B cell (primary cell): ENCODE measurements at regions of chr1 and their contacts with region 1.

Region 1: GRCh38 chr1:223123011-223123610 is 19.9 kb downstream of the TLR5 start:
- DNase-seq: no peak
- ATAC-seq: no peak
- H3K4me3 ChIP-seq: peak overlapping the region in 1 of 5 experiments; percentile 18
- H3K4me3 Mint-ChIP-seq: peak overlapping the region; percentile 27
- H3K27ac ChIP-seq: no peak overlapping the region
- H3K27ac Mint-ChIP-seq: no peak overlapping the region
- H3K4me1 ChIP-seq: peaks cover 4 to 5% of the 10 kb centered on the region in 2 donors
- H3K4me1 Mint-ChIP-seq: peaks cover 6% of the 10 kb centered on the region
- H3K27me3 ChIP-seq: peaks cover 0 to 3% (median 0%) of the 10 kb centered on the region in 4 experiments
- H3K27me3 Mint-ChIP-seq: peaks cover 4% of the 10 kb centered on the region
- CTCF ChIP-seq: no peak

Region 2: DNA sequence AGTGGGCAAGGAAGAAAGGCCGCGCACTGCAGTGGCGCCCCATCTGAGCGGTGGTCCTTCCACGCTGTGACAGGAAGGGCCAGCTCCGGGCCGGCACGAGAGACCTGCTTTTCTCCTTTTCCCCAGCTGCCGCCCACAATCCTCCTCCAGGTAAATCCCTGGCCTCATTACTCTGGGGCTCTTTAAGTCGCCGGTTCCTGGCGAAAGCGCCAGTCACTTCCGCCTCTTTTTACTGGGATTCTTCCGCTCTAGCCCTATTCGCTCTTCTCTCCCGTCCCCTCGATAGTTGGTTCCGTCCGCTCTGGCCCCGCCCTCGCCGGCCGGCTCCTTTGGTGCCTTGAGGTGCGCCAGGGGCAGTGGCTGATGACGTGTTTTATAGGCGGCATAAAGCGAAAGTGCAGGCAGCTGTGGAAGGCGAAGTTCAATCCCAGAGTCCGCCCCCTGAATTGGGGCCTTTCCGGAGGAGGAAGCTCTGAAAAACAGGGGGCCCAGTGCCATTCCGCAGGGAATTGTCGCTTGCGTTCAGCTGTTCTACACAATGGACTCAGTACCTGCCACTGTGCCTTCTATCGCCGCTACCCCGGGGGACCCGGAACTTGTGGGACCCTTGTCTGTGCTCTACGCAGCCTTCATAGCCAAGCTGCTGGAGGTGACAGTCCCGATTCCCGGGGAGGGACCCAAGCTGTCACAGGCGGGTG is 479.0 kb before region 1 on chr1:
- CTCF ChIA-PET with region 1: no interaction called
- POLR2A ChIA-PET with region 1: no interaction called
- intact Hi-C with region 1: loop called (anchors 5 kb)
- DNase-seq: peak; percentile 98
- ATAC-seq: peak; percentile 96
- H3K4me3 ChIP-seq: peak overlapping the region; percentile 71 to 98 (median 95)
- H3K4me3 Mint-ChIP-seq: peak overlapping the region; percentile 86
- H3K27ac ChIP-seq: peak overlapping the region; percentile 97
- H3K27ac Mint-ChIP-seq: peak overlapping the region; percentile 91
- H3K4me1 ChIP-seq: peaks cover 13 to 15% of the 10 kb centered on the region in 2 donors
- H3K4me1 Mint-ChIP-seq: peaks cover 30% of the 10 kb centered on the region
- H3K27me3 ChIP-seq: no peaks in the 10 kb centered on the region
- H3K27me3 Mint-ChIP-seq: no peaks in the 10 kb centered on the region
- CTCF ChIP-seq: no peak

Region 3: DNA sequence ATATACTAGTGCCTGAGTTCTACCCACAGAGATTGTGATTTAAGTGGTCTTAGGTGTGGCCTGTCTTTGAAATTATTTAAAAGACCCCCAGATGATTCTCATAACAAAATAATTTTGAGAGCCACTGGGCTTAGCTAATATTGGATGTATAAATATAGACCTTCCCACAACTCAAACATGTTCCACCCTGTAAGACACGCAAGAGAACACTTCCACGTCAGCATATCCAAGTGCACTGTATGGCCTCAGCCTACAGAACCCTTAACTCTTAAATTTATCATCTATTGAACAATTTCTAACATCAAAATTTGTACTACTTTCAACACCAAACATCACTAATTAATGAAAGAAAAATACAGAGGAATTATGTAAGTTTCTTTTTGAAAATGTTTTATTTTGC is 383.6 kb before region 1 on chr1:
- CTCF ChIA-PET with region 1: interaction called, 12 read pairs
- POLR2A ChIA-PET with region 1: no interaction called
- intact Hi-C with region 1: loop called (anchors 1 kb)
- DNase-seq: no peak
- ATAC-seq: no peak
- H3K4me3 ChIP-seq: peak overlapping the region; percentile 17 to 53 (median 33)
- H3K4me3 Mint-ChIP-seq: no peak overlapping the region
- H3K27ac ChIP-seq: peak overlapping the region; percentile 50 to 77
- H3K27ac Mint-ChIP-seq: no peak overlapping the region
- H3K4me1 ChIP-seq: peaks cover 58 to 61% of the 10 kb centered on the region in 2 donors
- H3K4me1 Mint-ChIP-seq: peaks cover 44% of the 10 kb centered on the region
- H3K27me3 ChIP-seq: no peaks in the 10 kb centered on the region
- H3K27me3 Mint-ChIP-seq: no peaks in the 10 kb centered on the region
- CTCF ChIP-seq: no peak

Region 4: GRCh38 chr1:222792744-222793143 is 330.4 kb before region 1 on chr1:
- CTCF ChIA-PET with region 1: interaction called, 22 read pairs
- POLR2A ChIA-PET with region 1: no interaction called
- intact Hi-C with region 1: loop called (anchors 1 kb)
- DNase-seq: peak; percentile 54
- ATAC-seq: peak; percentile 54
- H3K4me3 ChIP-seq: no peak overlapping the region
- H3K4me3 Mint-ChIP-seq: no peak overlapping the region
- H3K27ac ChIP-seq: no peak overlapping the region
- H3K27ac Mint-ChIP-seq: peak overlapping the region; percentile 47
- H3K4me1 ChIP-seq: peaks cover 16 to 21% of the 10 kb centered on the region in 2 donors
- H3K4me1 Mint-ChIP-seq: peaks cover 40% of the 10 kb centered on the region
- H3K27me3 ChIP-seq: no peaks in the 10 kb centered on the region
- H3K27me3 Mint-ChIP-seq: no peaks in the 10 kb centered on the region
- CTCF ChIP-seq: peak; percentile 69

Region 5: GRCh38 chr1:223133824-223134435 is 10.8 kb after region 1 on chr1:
- CTCF ChIA-PET with region 1: interaction called, 95 read pairs
- POLR2A ChIA-PET with region 1: no interaction called
- intact Hi-C with region 1: no loop called
- DNase-seq: peak; percentile 83
- ATAC-seq: peak; percentile 92
- H3K4me3 ChIP-seq: peak overlapping the region; percentile 13 to 58 (median 19)
- H3K4me3 Mint-ChIP-seq: peak overlapping the region; percentile 83
- H3K27ac ChIP-seq: no peak overlapping the region
- H3K27ac Mint-ChIP-seq: no peak overlapping the region
- H3K4me1 ChIP-seq: peaks cover 16 to 19% of the 10 kb centered on the region in 2 donors
- H3K4me1 Mint-ChIP-seq: peaks cover 22% of the 10 kb centered on the region
- H3K27me3 ChIP-seq: peaks cover 0 to 54% (median 30%) of the 10 kb centered on the region in 4 experiments
- H3K27me3 Mint-ChIP-seq: peaks cover 84% of the 10 kb centered on the region
- CTCF ChIP-seq: peak; percentile 12